ENCODE measurements at regions of chr2 and their contacts with region 1.

Region 1: DNA sequence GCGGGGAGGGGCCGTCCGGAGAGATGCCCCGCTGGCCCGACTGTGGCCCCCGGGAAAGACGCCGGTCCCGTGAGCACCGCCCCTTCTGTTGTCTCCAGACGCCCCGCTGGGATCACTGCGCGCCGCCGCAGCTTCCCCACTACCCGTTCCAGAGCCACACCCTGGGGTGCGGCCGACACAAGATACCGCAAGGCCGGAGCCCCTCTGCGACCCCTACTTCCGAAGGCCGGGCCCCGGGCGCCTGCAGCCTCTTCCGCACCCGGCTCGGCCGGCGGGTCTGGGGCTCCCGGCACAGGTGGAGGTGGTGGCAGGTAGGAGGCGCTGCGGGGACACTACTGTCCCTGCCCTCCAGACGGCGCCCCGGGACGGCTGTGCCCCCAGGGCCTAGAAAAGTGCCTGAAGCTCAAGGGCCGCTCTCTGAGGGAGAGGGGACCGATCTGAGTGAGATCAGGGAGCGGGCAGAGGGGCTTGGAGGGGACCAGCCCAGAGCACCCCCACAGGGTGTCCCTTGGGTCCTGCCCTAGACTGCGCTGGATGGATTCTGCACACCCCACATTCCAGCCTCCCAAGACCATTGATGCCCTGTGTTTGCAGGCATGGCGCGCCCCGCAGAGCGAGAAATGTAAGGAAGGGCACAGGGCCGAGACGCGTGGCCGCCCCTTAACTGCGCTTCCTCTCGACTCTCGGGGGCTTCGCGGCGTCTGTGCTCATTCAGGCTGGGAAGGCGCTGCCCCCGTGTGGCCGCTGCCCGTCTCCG is 80.0 kb downstream of the GFPT1 start:
- DNase-seq: peak; percentile 94 to 96
- ATAC-seq: peak; percentile 93
- H3K4me3 ChIP-seq: peak overlapping the region; percentile 49 to 73
- H3K27ac ChIP-seq: peak overlapping the region; percentile 58 to 66
- H3K4me1 ChIP-seq: peaks cover 3 to 4% of the 10 kb centered on the region in 2 donors
- H3K27me3 ChIP-seq: no peaks in the 10 kb centered on the region

Region 2: DNA sequence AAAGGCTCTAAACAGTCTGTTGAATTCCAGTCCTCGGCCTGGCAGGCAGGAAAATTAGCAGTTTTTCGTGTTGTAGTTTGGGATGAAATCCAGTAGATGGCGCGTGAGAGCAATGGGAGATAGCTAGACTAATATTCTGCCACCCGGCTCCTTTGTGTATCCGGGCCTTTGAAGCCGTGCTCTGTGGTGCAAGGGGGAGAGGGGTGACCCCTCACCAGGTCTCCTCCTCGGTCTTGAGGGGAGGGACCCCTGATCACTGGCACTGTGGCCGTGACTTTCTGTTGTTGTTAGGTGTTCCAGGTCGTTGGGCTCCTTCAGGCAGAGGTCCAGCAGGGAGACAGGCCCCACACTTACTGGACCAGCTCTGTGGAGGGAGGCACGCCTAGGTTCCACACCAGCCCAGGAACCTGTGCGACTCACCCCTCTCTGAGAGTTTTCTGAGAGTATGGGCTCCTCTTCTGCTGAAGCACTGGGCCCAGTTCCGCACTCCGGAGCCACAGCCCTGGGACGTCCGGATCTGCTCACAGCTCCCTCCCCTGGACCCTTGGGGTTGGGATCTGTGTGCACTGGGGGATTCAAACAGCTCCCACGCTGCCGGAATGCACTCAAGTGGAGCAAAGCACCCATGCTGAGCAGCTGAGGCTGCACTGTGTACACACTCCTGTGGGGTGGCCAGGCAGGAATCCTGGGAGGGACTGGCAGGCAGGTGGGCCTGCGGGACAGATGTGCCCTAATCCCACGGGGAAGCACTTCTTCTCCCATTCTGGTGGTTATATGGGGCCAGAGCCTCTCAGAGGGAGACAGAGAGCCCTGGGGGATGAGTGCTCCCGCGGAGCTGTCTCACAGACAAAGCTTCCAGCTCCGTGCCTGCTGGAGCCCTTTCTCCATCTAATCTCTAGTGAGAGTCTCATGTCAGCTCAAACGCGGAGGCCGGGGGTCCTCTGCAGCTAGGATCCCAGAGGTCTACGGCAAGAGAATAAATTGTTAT is 363.1 kb before region 1 on chr2:
- intact Hi-C with region 1: loop called (anchors 5 to 10 kb)
- DNase-seq: peak in 1 of 2 donors; percentile 57
- ATAC-seq: peak; percentile 85
- H3K4me3 ChIP-seq: no peak overlapping the region
- H3K27ac ChIP-seq: no peak overlapping the region
- H3K4me1 ChIP-seq: no peaks in the 10 kb centered on the region
- H3K27me3 ChIP-seq: no peaks in the 10 kb centered on the region

Region 3: DNA sequence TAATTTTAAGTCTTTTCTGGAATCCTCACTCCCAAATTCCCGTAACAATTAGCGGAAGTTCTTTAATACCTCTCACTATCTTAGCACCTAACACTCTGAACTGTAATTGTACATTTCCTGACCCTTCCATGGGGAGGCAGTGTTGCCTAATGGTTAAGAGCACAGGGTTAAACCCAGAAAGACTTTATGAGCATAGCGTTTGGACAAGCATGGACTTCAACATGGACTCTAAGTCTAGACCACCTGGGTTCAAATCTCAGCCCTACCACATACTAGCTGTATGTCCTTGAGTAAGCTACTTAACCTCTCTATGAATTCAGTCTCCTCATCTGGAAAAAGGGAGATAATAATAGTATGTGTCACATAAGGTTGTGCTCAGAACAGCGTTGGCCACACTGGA is 281.0 kb before region 1 on chr2:
- intact Hi-C with region 1: loop called in 1 of 2 experiments (anchors 5 kb)
- DNase-seq: no peak
- ATAC-seq: peak; percentile 74
- H3K4me3 ChIP-seq: no peak overlapping the region
- H3K27ac ChIP-seq: no peak overlapping the region
- H3K4me1 ChIP-seq: peaks cover 7 to 14% of the 10 kb centered on the region in 2 donors
- H3K27me3 ChIP-seq: no peaks in the 10 kb centered on the region

Region 4: DNA sequence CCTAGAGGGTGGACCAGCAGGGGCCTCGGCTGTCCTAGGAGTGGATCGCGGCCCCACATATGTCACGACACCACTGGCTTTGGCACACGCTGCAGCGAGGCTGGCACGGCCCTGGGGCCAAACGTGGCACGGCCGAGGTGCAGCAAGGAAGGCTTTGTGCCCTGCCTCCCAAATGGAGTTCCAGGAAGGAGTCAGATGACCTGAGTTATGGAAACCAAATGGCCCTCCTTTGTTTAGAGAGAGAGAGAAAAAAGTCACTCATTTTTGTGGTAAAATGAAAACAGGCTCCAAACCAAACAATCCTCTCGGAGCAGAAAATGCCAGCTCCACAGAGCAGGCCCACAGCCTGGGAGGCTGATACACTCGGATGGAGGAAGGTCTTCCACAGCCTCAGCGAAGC is 188.4 kb before region 1 on chr2:
- intact Hi-C with region 1: loop called in 1 of 2 experiments (anchors 2 kb)
- DNase-seq: peak in 1 of 2 donors; percentile 64
- ATAC-seq: peak; percentile 60
- H3K4me3 ChIP-seq: no peak overlapping the region
- H3K27ac ChIP-seq: peak overlapping the region; percentile 23 to 87
- H3K4me1 ChIP-seq: peaks cover 7 to 9% of the 10 kb centered on the region in 2 donors
- H3K27me3 ChIP-seq: no peaks in the 10 kb centered on the region

Region 5: GRCh38 chr2:69169655-69170389 is 137.2 kb before region 1 on chr2:
- intact Hi-C with region 1: loop called in 1 of 2 experiments (anchors 5 kb)
- DNase-seq: no peak
- ATAC-seq: no peak
- H3K4me3 ChIP-seq: no peak overlapping the region
- H3K27ac ChIP-seq: peak overlapping the region; percentile 73 to 76
- H3K4me1 ChIP-seq: peaks cover 7 to 13% of the 10 kb centered on the region in 2 donors
- H3K27me3 ChIP-seq: no peaks in the 10 kb centered on the region